ENCODE measurements at regions of chr16 and their contacts with region 1.

Region 1: GRCh38 chr16:89171463-89172170 is at the start of gene CDH15:
- DNase-seq: peak; percentile 97
- H3K4me3 ChIP-seq: peak within 1 kb of the TSS in 2 of 4 donors; percentile 12 to 38
- H3K27ac ChIP-seq: peak within 1 kb of the TSS in 3 of 4 donors; percentile 9 to 33 (median 15)
- H3K4me1 ChIP-seq: peaks cover 16 to 23% (median 20%) of the 10 kb centered on the region in 4 donors
- H3K27me3 ChIP-seq: peaks cover 87% of the 10 kb centered on the region
- CTCF ChIP-seq: no peak
- EP300 ChIP-seq: no peak
- POLR2A ChIP-seq: no peak
- total RNA-seq, gene CDH15: not detected

Region 2: DNA sequence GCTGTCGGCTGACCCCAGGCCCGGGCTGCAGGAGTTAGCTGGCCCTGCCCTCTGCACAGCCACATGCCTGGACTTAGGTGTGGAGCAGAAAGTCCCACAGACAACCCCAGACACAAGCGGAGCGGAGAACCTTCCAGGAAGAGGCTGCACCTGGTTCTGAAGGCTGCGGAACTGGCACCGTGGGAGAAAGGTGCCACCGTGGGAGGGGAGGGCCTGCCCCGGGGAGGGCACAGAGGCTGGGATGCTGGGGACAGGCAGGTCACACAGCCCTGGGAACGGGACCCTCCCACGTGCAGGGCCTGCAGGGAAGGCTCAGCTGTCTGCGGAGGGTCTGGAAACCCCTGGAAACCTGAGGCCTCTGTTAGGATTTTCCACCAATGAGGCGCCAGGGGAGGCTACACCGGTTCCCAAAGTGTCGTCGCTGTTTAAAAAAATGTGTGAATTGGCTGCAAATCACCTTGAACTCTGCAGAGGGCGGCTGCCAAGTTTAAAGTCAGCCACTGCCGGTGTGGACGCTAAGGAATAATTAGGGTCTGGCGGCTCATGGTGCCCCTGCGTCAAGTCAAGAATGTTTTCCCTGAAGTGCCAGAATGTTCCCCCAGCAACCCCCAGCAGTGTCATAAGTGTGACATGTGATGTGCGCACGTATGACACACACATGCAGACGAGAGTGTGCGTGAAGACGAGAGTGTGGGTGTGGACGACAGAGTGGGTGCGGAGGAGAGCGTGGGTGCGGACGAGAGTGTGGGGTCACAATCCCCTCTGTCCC is 254.3 kb before region 1 on chr16:
- in situ Hi-C with region 1: no loop called
- intact Hi-C with region 1: no loop called
- DNase-seq: no peak
- H3K4me3 ChIP-seq: no peak overlapping the region
- H3K27ac ChIP-seq: no peak overlapping the region
- H3K4me1 ChIP-seq: peaks cover 11 to 20% (median 19%) of the 10 kb centered on the region in 4 donors
- H3K27me3 ChIP-seq: no peaks in the 10 kb centered on the region
- CTCF ChIP-seq: no peak
- EP300 ChIP-seq: no peak
- POLR2A ChIP-seq: no peak

Region 3: GRCh38 chr16:88941913-88942909 is 229.4 kb before region 1 on chr16:
- in situ Hi-C with region 1: loop called in 2 of 4 experiments (anchors 25 kb)
- intact Hi-C with region 1: no loop called
- DNase-seq: peak; percentile 69
- H3K4me3 ChIP-seq: peak overlapping the region in 3 of 4 donors; percentile 33 to 52 (median 45)
- H3K27ac ChIP-seq: peak overlapping the region in 1 of 4 donors; percentile 46
- H3K4me1 ChIP-seq: peaks cover 5 to 36% (median 25%) of the 10 kb centered on the region in 4 donors
- H3K27me3 ChIP-seq: peaks cover 75% of the 10 kb centered on the region
- CTCF ChIP-seq: peak; percentile 47 to 70 (median 57)
- EP300 ChIP-seq: no peak
- POLR2A ChIP-seq: no peak

Region 4: DNA sequence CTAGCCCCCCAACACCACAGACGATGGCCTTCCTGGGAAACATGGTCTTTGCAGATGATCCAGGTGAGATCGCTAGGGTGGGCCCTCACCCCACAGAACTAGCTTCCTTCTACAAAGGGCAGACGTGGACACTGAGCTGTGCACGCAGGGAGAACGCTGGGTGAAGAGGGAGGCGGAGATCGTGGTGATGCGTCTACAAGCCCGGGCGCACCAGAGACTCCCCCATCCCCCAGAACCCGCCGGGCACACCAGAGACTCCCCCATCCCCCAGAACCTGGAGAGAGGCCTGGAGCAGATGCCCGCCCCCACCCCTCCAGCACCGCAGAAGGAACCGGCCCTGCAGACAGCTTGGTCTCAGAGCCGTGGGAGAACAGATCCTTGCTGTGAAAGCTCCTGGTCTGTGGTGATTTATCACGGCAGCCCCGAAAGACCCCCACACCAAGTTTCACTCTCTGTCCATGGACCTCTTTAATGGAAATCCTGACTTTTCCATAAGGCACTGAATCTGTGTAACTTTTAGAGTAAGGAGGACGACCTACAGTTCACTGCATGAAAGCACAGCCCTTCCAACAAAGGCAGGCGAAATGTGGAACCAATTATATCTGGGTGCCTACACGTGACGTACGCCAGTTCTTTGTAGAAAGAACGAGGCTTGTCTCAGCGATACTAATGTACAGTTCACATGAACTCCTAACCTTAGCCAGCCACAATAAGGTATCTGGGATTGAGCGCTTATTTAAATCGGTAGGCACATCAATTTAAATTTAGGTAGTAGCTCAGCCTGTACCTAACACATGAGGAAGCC is 230.2 kb after region 1 on chr16:
- in situ Hi-C with region 1: no loop called
- intact Hi-C with region 1: no loop called
- DNase-seq: no peak
- H3K4me3 ChIP-seq: no peak overlapping the region
- H3K27ac ChIP-seq: no peak overlapping the region
- H3K4me1 ChIP-seq: peaks cover 3 to 37% (median 17%) of the 10 kb centered on the region in 4 donors
- H3K27me3 ChIP-seq: no peaks in the 10 kb centered on the region
- CTCF ChIP-seq: no peak
- EP300 ChIP-seq: no peak
- POLR2A ChIP-seq: no peak

Measured in transverse colon (tissue), 4 donors.